Activated CD8-positive, alpha-beta T cell treated with anti-CD3 and anti-CD28 coated beads, Interleukin-2, amount 10 ng/mL, durations not matched to agents 7 days and 5 days (primary cell): ENCODE measurements at regions of chr17 and their contacts with region 1.

Region 1: GRCh38 chr17:78128551-78129350 is at the start of gene TMC6:
- DNase-seq: peak; percentile 81
- ATAC-seq: peak; percentile 16
- H3K4me3 Mint-ChIP-seq: peak within 1 kb of the TSS; percentile 99
- H3K27ac Mint-ChIP-seq: peak within 1 kb of the TSS; percentile 99
- H3K4me1 Mint-ChIP-seq: peaks cover 52% of the 10 kb centered on the region
- H3K27me3 Mint-ChIP-seq: no peaks in the 10 kb centered on the region
- total RNA-seq, gene TMC6: 407 to 476 TPM

Region 2: DNA sequence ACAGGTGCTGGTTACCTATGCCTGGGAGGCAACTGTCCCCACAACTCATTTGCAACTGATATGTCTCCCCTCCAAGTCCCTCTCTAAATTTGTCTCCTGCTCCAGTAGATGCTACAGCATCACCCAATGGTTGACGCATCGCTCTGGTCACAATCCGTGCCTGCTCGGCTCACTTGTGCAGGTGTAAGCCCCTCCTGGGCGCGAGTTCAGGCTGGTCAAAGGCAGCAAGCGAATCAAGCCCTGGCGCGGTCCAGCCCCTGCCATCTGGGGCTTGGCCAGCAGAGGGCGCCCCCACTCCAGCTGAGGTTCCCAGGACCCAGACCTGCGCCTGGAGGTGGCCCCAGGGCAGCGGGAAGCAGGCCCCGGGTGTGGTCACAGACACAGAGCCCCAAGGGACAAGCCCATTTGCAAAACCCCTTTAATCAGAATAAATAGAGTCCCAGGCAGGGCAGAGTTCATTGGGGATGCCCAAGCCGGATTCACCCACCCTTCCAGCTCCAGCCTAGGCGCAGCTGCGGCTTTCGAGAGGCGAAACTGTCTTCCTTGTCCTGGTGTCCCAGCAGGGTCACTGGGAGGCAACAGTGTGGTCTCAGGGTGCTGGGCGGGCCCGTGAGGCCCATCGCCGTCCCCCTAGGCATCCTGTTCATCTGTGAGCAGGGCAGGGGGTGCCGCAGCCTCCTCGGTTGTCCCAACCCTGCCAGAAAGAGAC is 16.1 kb before region 1 on chr17:
- CTCF ChIA-PET with region 1: interaction called, 63 read pairs
- POLR2A ChIA-PET with region 1: interaction called, 182 read pairs
- DNase-seq: peak; percentile 84
- ATAC-seq: peak; percentile 80
- H3K4me3 Mint-ChIP-seq: no peak overlapping the region
- H3K27ac Mint-ChIP-seq: peak overlapping the region; percentile 81
- H3K4me1 Mint-ChIP-seq: peaks cover 35% of the 10 kb centered on the region
- H3K27me3 Mint-ChIP-seq: no peaks in the 10 kb centered on the region

Region 3: GRCh38 chr17:78140169-78140976 is 11.6 kb after region 1 on chr17:
- CTCF ChIA-PET with region 1: interaction called, 133 read pairs
- POLR2A ChIA-PET with region 1: interaction called, 182 read pairs
- DNase-seq: peak; percentile 98
- ATAC-seq: peak; percentile 90
- H3K4me3 Mint-ChIP-seq: peak overlapping the region; percentile 43
- H3K27ac Mint-ChIP-seq: peak overlapping the region; percentile 89
- H3K4me1 Mint-ChIP-seq: peaks cover 69% of the 10 kb centered on the region
- H3K27me3 Mint-ChIP-seq: no peaks in the 10 kb centered on the region

Region 4: DNA sequence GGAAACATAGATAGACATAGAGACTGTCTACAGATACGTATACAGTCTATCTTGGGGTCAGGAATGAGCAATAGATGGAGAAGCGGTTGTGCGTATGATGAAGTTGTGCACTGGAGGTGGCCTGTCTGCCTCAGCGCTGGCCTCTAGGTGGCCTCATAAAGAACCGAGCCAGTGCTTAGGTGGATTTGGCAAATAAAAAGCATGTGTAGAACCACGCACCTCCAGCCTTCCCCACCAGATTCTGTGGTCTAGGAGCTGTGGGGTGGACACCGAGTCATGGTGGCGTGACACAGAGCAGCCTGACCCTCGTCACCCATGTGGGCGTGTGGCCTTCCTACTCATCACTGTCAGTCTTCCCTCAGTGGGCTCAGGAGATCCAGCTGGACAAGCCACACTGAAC is 283.7 kb after region 1 on chr17:
- CTCF ChIA-PET with region 1: no interaction called
- POLR2A ChIA-PET with region 1: no interaction called
- DNase-seq: peak; percentile 59
- ATAC-seq: peak; percentile 17
- H3K4me3 Mint-ChIP-seq: peak overlapping the region; percentile 76
- H3K27ac Mint-ChIP-seq: peak overlapping the region; percentile 97
- H3K4me1 Mint-ChIP-seq: peaks cover 87% of the 10 kb centered on the region
- H3K27me3 Mint-ChIP-seq: no peaks in the 10 kb centered on the region